ENCODE measurements at regions of chr15 and their contacts with region 1.

Region 1: DNA sequence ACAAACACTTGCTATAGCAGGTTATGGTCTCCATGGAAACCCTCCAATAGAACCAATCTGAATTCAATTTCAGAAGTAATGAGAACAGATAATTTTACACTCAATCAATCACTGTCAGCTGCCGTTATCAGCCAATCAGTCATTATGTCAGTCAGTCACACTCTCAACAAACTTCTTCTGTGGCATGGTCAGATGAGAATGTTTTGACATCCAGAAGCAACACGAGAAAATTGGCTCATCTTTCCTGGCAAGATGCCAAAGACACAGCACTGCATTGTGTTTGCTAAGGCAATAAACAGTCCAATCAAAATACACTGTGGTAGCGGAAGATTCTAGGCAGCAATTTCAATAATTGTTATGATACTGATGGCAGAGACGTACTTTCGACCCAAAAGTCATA is 190.7 kb downstream of the RORA start:
- DNase-seq: no peak
- ATAC-seq: peak; percentile 15
- H3K4me3 ChIP-seq: no peak overlapping the region
- H3K27ac ChIP-seq: peak overlapping the region in 1 of 2 donors; percentile 25
- H3K4me1 ChIP-seq: peaks cover 5 to 9% of the 10 kb centered on the region in 2 donors
- H3K27me3 ChIP-seq: no peaks in the 10 kb centered on the region

Region 2: GRCh38 chr15:60585743-60586708 is 452.4 kb before region 1 on chr15:
- intact Hi-C with region 1: loop called in 1 of 2 experiments (anchors 10 kb)
- DNase-seq: no peak
- ATAC-seq: peak; percentile 81
- H3K4me3 ChIP-seq: no peak overlapping the region
- H3K27ac ChIP-seq: no peak overlapping the region
- H3K4me1 ChIP-seq: peaks cover 0 to 3% of the 10 kb centered on the region in 2 donors
- H3K27me3 ChIP-seq: no peaks in the 10 kb centered on the region

Region 3: GRCh38 chr15:60804986-60805949 is 233.1 kb before region 1 on chr15:
- intact Hi-C with region 1: loop called in 1 of 2 experiments (anchors 10 kb)
- DNase-seq: peak; percentile 72 to 90
- ATAC-seq: peak; percentile 64
- H3K4me3 ChIP-seq: no peak overlapping the region
- H3K27ac ChIP-seq: no peak overlapping the region
- H3K4me1 ChIP-seq: peaks cover 8 to 12% of the 10 kb centered on the region in 2 donors
- H3K27me3 ChIP-seq: no peaks in the 10 kb centered on the region

Region 4: GRCh38 chr15:60916679-60917460 is 121.5 kb before region 1 on chr15:
- intact Hi-C with region 1: no loop called
- DNase-seq: peak; percentile 93
- ATAC-seq: peak; percentile 92
- H3K4me3 ChIP-seq: peak overlapping the region in 1 of 2 donors; percentile 28
- H3K27ac ChIP-seq: peak overlapping the region; percentile 70 to 79
- H3K4me1 ChIP-seq: no peaks in the 10 kb centered on the region
- H3K27me3 ChIP-seq: no peaks in the 10 kb centered on the region

Region 5: GRCh38 chr15:60945196-60945595 is 93.2 kb before region 1 on chr15:
- intact Hi-C with region 1: loop called (anchors 10 kb)
- DNase-seq: peak; percentile 81 to 89
- ATAC-seq: peak; percentile 87
- H3K4me3 ChIP-seq: peak overlapping the region in 1 of 2 donors; percentile 15
- H3K27ac ChIP-seq: no peak overlapping the region
- H3K4me1 ChIP-seq: peaks cover 0 to 2% of the 10 kb centered on the region in 2 donors
- H3K27me3 ChIP-seq: no peaks in the 10 kb centered on the region

Region 6: GRCh38 chr15:60973637-60974415 is 64.6 kb before region 1 on chr15:
- intact Hi-C with region 1: loop called in 1 of 2 experiments (anchors 10 kb)
- DNase-seq: no peak
- ATAC-seq: no peak
- H3K4me3 ChIP-seq: no peak overlapping the region
- H3K27ac ChIP-seq: no peak overlapping the region
- H3K4me1 ChIP-seq: peaks cover 0 to 5% of the 10 kb centered on the region in 2 donors
- H3K27me3 ChIP-seq: no peaks in the 10 kb centered on the region

Region 7: DNA sequence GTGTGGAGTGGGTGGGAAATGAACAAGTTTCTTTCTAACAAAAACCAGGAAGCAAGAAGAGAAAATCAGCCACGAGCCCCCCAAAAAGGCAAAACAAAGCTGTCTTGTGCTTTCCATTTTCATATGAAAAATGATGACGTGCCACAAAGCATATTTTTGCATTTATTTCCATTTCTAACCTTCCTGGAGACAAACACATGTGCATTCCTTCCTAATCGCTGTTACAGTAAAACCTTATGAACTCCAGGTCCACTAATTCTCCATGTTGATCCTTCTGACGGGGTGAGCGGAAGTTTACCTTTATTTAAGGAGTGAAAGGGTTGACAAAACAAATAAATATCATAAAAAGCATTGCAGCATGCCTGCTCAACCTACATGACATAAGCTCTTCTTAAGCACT is 20.8 kb before region 1 on chr15:
- intact Hi-C with region 1: no loop called
- DNase-seq: no peak
- ATAC-seq: no peak
- H3K4me3 ChIP-seq: no peak overlapping the region
- H3K27ac ChIP-seq: no peak overlapping the region
- H3K4me1 ChIP-seq: no peaks in the 10 kb centered on the region
- H3K27me3 ChIP-seq: no peaks in the 10 kb centered on the region